BJ (cell line): ENCODE measurements at regions of chr4 and their contacts with region 1.

Region 1: DNA sequence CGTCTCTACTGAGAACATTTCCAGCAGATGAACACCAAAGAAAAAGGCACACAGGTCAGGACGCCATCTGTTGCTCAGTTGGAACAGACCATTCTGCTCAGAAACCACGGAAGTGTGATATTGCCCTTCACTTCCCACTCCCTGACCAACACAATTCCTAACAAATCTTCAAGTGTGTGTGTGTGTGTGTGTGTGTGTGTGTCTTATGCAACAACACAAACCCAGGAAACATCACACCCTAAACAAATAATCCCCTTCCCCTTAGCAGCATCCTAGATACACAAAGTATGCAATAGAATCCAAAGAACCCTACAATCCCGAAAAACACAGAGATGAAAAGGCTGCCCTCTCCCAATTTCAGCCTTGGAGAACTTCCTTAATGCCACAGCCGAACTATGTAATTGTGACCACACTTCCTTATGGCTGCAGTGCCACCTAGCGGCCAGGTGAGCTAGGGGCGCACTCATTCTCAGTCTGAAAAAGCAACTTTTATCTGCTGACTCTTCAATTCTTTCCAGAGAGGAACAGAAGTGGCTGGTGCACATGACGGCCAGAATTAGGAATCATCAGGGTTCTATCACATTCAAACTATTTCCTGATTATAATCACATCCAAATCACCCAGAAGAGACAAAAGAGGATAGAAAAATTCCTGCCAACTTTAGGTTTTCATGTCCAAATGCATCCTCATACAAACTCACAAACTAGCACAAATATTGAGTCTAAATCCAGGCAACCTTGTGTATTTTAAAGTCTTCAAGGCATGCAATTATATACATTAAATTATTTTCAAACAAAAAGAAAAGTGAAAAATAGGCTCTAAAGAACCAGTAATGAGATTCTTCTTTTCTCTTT is 164.9 kb downstream of the DHX15 start:
- DNase-seq: peak; percentile 6
- H3K4me3 ChIP-seq: no peak overlapping the region
- H3K27me3 ChIP-seq: no peaks in the 10 kb centered on the region
- CTCF ChIP-seq: peak; percentile 90

Region 2: DNA sequence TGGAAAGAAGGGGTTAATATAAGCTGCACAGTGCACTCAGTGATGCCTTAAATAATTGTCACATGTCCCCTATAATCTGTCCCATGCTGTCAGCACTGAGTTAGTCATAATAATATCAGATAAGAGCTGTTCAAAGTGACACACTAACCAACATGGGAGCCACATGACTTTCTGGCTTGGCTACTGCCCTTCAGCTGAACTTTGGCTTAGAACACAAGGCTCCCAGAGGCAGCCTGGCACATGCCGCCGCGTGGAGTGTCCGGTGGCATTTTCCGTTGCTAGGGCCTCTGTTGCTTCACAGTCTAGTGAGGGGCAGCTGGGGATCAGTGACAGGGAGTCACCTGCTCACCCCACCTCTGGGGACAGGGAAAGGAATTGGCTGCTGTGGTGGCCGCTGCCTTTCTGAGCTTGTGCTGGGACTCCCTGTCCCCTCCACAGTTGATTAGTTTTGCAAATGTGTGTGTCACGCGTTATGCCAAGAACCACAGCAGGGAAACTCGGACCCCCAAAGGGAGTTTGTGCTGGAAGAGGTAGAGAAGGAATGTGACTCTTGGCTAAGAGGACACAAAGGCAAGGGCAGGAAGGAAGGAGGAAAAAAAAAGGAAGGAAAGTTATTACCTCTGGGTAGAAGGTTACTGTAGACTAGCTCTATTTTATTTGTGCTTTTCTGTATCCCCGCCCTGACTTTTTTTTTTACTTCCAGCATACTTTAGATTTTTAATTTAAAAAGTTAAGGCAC is 488.5 kb before region 1 on chr4:
- CTCF ChIA-PET with region 1: interaction called, 10 read pairs
- POLR2A ChIA-PET with region 1: no interaction called
- DNase-seq: no peak
- H3K4me3 ChIP-seq: no peak overlapping the region
- H3K27me3 ChIP-seq: no peaks in the 10 kb centered on the region; the same call in 1 of the 2 replicates
- CTCF ChIP-seq: no peak